ENCODE measurements at regions of chr11 and their contacts with region 1.

Region 1: DNA sequence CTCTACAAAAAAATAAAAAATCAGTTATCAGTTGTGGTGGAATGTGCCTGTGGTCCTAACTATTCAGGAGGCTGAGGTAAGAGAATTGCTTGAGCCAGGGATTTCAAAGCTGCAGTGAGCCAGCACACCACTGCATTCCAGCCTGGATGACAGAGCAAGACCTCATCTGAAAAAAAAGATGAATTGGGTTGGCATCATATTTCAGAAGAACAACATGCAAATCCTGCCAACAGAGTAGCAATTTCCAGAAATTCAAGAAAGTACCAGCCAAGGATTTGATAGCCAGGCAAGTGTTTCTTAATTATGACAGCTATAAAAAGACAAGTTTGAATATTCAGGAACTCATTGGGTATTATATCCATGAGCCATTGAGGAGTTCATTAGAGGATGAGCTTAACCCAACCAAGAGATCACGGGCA is 75.2 kb downstream of the USP47 start:
- DNase-seq: peak in 1 of 2 experiments; percentile 14
- H3K4me3 ChIP-seq: no peak overlapping the region
- H3K27ac ChIP-seq: no peak overlapping the region
- H3K4me1 ChIP-seq: no peaks in the 10 kb centered on the region
- H3K27me3 ChIP-seq: no peaks in the 10 kb centered on the region
- CTCF ChIP-seq: no peak

Region 2: GRCh38 chr11:11672789-11673188 is 244.2 kb before region 1 on chr11:
- CTCF ChIA-PET with region 1: no interaction called
- POLR2A ChIA-PET with region 1: no interaction called
- intact Hi-C with region 1: no loop called
- DNase-seq: no peak
- H3K4me3 ChIP-seq: no peak overlapping the region
- H3K27ac ChIP-seq: no peak overlapping the region
- H3K4me1 ChIP-seq: no peaks in the 10 kb centered on the region
- H3K27me3 ChIP-seq: peaks cover 63% of the 10 kb centered on the region
- CTCF ChIP-seq: no peak

Region 3: DNA sequence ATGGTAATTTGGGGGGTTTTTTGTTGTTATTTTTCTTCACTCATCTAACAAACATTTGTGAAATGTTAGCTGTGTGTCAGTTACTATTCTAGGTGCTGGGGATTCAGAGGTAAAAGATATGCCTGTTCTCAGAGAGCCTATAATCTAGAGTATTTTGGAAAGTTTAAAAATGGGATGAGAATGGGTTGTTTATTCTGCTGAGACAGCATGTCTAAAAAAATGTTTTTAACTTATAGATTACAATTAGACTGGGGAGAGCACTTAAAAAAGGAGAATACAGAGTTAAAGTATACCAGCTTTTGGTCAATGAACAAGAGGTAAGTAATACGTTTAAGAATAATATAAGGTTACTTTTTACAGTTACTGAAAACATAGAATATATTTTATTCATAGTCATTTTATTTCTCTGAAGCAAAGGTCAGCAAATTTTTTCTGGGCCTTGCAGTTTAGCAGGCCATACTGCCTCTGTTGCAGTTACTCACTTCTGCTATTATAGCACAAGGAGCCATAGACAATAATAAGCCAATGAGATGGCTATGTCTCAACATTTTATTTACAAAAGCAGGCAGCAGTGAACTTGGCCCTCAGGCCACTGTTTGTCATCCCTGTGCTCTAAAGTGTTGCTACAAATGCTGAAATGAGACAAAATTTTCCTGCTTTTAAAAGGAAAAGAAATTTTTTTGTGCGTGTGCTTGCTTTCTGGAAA is 31.4 kb after region 1 on chr11:
- CTCF ChIA-PET with region 1: no interaction called
- POLR2A ChIA-PET with region 1: interaction called, 10 read pairs
- intact Hi-C with region 1: no loop called
- DNase-seq: no peak
- H3K4me3 ChIP-seq: no peak overlapping the region
- H3K27ac ChIP-seq: no peak overlapping the region
- H3K4me1 ChIP-seq: no peaks in the 10 kb centered on the region
- H3K27me3 ChIP-seq: no peaks in the 10 kb centered on the region
- CTCF ChIP-seq: no peak

Measured in PC-9 (cell line).